B cell (primary cell): ENCODE measurements at regions of chr2 and their contacts with region 1.

Region 1: DNA sequence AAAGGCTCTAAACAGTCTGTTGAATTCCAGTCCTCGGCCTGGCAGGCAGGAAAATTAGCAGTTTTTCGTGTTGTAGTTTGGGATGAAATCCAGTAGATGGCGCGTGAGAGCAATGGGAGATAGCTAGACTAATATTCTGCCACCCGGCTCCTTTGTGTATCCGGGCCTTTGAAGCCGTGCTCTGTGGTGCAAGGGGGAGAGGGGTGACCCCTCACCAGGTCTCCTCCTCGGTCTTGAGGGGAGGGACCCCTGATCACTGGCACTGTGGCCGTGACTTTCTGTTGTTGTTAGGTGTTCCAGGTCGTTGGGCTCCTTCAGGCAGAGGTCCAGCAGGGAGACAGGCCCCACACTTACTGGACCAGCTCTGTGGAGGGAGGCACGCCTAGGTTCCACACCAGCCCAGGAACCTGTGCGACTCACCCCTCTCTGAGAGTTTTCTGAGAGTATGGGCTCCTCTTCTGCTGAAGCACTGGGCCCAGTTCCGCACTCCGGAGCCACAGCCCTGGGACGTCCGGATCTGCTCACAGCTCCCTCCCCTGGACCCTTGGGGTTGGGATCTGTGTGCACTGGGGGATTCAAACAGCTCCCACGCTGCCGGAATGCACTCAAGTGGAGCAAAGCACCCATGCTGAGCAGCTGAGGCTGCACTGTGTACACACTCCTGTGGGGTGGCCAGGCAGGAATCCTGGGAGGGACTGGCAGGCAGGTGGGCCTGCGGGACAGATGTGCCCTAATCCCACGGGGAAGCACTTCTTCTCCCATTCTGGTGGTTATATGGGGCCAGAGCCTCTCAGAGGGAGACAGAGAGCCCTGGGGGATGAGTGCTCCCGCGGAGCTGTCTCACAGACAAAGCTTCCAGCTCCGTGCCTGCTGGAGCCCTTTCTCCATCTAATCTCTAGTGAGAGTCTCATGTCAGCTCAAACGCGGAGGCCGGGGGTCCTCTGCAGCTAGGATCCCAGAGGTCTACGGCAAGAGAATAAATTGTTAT is 8.8 kb downstream of the GKN2 start:
- DNase-seq: peak; percentile 70
- ATAC-seq: peak; percentile 73
- H3K4me3 ChIP-seq: no peak overlapping the region
- H3K4me3 Mint-ChIP-seq: no peak overlapping the region
- H3K27ac ChIP-seq: no peak overlapping the region
- H3K27ac Mint-ChIP-seq: no peak overlapping the region
- H3K4me1 ChIP-seq: peaks cover 0 to 5% of the 10 kb centered on the region in 2 donors
- H3K4me1 Mint-ChIP-seq: peaks cover 4% of the 10 kb centered on the region
- H3K27me3 ChIP-seq: peaks cover 0 to 24% (median 12%) of the 10 kb centered on the region in 4 experiments
- H3K27me3 Mint-ChIP-seq: peaks cover 54% of the 10 kb centered on the region
- CTCF ChIP-seq: peak; percentile 91

Region 2: DNA sequence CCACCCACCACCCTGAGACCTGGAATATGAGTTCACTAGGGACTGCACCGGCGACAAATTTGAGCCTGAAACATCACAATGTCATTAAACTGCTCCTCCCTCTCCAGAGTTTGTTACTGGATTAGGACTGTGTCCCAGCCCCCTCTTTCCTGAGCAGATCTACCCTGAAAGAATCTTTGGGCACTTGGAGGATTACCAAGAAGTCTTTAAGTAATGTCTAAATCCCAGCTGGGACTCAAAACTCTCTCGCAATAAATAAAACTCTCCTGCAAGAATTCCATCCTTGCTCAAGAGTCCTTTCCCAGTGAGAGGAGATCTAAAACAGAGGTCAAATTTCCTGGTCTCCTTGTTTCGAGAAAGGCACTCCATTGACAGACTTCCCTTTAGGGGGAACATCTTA is 12.1 kb before region 1 on chr2:
- CTCF ChIA-PET with region 1: interaction called, 15 read pairs
- POLR2A ChIA-PET with region 1: no interaction called
- intact Hi-C with region 1: no loop called
- DNase-seq: no peak
- ATAC-seq: no peak
- H3K4me3 ChIP-seq: no peak overlapping the region
- H3K4me3 Mint-ChIP-seq: no peak overlapping the region
- H3K27ac ChIP-seq: no peak overlapping the region
- H3K27ac Mint-ChIP-seq: no peak overlapping the region
- H3K4me1 ChIP-seq: no peaks in the 10 kb centered on the region
- H3K4me1 Mint-ChIP-seq: no peaks in the 10 kb centered on the region
- H3K27me3 ChIP-seq: peaks cover 0 to 5% (median 0%) of the 10 kb centered on the region in 4 experiments
- H3K27me3 Mint-ChIP-seq: peaks cover 8% of the 10 kb centered on the region
- CTCF ChIP-seq: no peak